OCI-LY7 (cell line): ENCODE measurements at regions of chr12 and their contacts with region 1.

Region 1: GRCh38 chr12:52032804-52033502 is 18.3 kb upstream of the NR4A1 start:
- DNase-seq: peak; percentile 95
- H3K4me3 ChIP-seq: peak overlapping the region; percentile 62
- H3K27ac ChIP-seq: peak overlapping the region; percentile 54
- H3K4me1 ChIP-seq: peaks cover 44% of the 10 kb centered on the region
- CTCF ChIP-seq: no peak

Region 2: GRCh38 chr12:51932218-51933076 is 100.5 kb before region 1 on chr12:
- CTCF ChIA-PET with region 1: no interaction called
- POLR2A ChIA-PET with region 1: no interaction called
- intact Hi-C with region 1: no loop called
- DNase-seq: no peak
- H3K4me3 ChIP-seq: no peak overlapping the region
- H3K27ac ChIP-seq: no peak overlapping the region
- H3K4me1 ChIP-seq: no peaks in the 10 kb centered on the region
- CTCF ChIP-seq: no peak

Region 3: GRCh38 chr12:51942501-51943000 is 90.4 kb before region 1 on chr12:
- CTCF ChIA-PET with region 1: no interaction called
- POLR2A ChIA-PET with region 1: no interaction called
- intact Hi-C with region 1: no loop called
- DNase-seq: no peak
- H3K4me3 ChIP-seq: no peak overlapping the region
- H3K27ac ChIP-seq: no peak overlapping the region
- H3K4me1 ChIP-seq: no peaks in the 10 kb centered on the region
- CTCF ChIP-seq: no peak

Region 4: GRCh38 chr12:52050761-52051541 is 18.0 kb after region 1 on chr12 and contains the start of gene NR4A1:
- CTCF ChIA-PET with region 1: interaction called, 3 read pairs
- POLR2A ChIA-PET with region 1: interaction called, 10 read pairs
- intact Hi-C with region 1: loop called (anchors 2 kb)
- DNase-seq: peak; percentile 84
- H3K4me3 ChIP-seq: peak within 1 kb of the TSS; percentile 68
- H3K27ac ChIP-seq: peak within 1 kb of the TSS; percentile 66
- H3K4me1 ChIP-seq: peaks cover 36% of the 10 kb centered on the region
- CTCF ChIP-seq: peak; percentile 53
- total RNA-seq, gene NR4A1: 25.3 and 29.3 TPM in 2 replicates

Region 5: GRCh38 chr12:52069327-52070184 is 36.6 kb after region 1 on chr12 and contains the start of gene ATG101:
- CTCF ChIA-PET with region 1: interaction called, 3 read pairs
- POLR2A ChIA-PET with region 1: interaction called, 5 read pairs
- intact Hi-C with region 1: loop called (anchors 2 kb)
- DNase-seq: peak; percentile 98
- H3K4me3 ChIP-seq: peak within 1 kb of the TSS; percentile 91
- H3K27ac ChIP-seq: peak within 1 kb of the TSS; percentile 73
- H3K4me1 ChIP-seq: peaks cover 39% of the 10 kb centered on the region
- CTCF ChIP-seq: peak; percentile 81
- total RNA-seq, gene ATG101: 53.9 and 65.5 TPM in 2 replicates

Region 6: GRCh38 chr12:52082988-52083637 is 50.2 kb after region 1 on chr12:
- CTCF ChIA-PET with region 1: interaction called, 10 read pairs
- POLR2A ChIA-PET with region 1: interaction called, 7 read pairs
- intact Hi-C with region 1: no loop called
- DNase-seq: peak; percentile 80
- H3K4me3 ChIP-seq: no peak overlapping the region
- H3K27ac ChIP-seq: peak overlapping the region; percentile 84
- H3K4me1 ChIP-seq: peaks cover 68% of the 10 kb centered on the region
- CTCF ChIP-seq: peak; percentile 100

Region 7: DNA sequence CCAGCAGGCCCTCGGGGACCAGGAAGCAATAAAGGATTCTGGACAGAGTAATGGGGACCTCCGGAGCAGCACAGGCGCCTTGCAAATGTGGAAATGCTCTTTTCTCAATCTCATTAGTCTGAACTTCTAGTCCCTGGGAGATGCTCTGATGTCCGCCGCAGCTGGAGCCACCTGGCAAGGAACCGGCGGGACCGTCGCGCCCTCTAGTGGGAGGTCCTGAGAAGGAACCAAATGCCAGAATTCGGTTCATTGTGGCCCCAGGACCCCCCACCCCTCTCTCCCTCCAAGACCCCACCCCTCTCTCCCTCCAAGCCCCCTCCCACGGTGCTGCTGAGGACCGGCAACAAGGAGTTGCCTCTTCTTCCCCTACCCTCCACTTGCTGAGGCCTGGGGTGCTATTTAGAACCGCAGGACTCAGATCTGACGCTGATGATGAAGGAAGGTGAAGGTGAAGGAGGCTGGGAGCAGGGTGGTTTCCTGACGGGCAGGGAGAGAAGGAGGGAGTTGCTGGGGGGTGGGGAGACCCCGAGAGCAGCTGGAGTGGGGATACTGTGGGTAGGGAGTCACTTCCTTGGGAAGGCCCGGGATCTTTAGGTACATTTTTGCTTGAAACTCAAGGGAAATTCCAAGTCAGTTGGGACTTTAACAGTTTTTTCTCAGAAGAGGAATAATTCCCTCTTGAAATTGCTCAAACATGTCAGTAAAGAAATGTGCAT is 89.0 kb after region 1 on chr12:
- CTCF ChIA-PET with region 1: interaction called, 19 read pairs
- POLR2A ChIA-PET with region 1: interaction called, 33 read pairs
- intact Hi-C with region 1: no loop called
- DNase-seq: peak; percentile 86
- H3K4me3 ChIP-seq: peak overlapping the region; percentile 27
- H3K27ac ChIP-seq: peak overlapping the region; percentile 41
- H3K4me1 ChIP-seq: peaks cover 70% of the 10 kb centered on the region
- CTCF ChIP-seq: peak; percentile 89

Region 8: DNA sequence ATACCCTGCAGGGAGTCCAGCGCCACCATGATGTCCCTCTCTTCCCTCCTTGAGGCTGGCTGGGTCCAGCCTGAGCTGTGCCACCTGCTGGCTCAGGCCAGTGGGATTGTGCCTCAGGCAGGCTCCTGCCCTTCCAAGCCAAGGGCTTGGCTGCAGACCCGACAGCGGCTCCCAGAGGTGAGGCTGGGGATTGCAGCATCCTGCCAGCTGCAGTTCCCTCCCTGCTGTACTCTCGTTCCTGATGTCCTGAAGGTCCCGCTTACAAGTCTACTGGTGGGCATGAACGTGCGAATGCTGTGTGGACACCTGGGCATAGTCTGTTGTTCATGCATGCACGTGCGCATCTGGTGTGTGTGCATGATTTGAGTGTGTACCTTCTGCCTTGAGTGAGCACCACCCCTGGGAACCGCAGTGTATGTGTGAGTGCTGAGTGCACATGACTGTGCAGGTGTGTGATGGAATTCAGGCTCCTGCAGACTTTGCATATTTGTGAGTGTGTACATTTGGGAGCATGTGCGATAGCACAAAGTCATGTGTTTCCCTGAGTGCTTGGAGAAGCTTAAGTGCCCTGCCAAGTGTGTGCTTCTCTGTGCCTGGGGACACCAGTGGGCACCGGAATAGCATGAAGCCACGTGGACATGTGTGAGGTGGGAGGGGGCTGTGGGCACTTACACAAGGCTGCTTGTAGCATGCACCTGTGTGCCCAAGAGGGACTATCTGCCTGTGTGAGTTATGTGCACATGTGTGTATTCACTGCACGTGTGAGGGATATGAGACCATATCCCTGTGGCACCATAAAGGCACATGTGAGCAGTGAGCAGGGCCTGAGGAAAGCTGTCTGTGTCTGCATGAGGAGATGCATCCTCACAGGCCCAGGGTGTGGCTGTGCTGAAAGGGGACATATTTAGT is 180.8 kb after region 1 on chr12:
- CTCF ChIA-PET with region 1: no interaction called
- POLR2A ChIA-PET with region 1: no interaction called
- intact Hi-C with region 1: no loop called
- DNase-seq: peak; percentile 49
- H3K4me3 ChIP-seq: no peak overlapping the region
- H3K27ac ChIP-seq: no peak overlapping the region
- H3K4me1 ChIP-seq: no peaks in the 10 kb centered on the region
- CTCF ChIP-seq: peak; percentile 86

Region 9: DNA sequence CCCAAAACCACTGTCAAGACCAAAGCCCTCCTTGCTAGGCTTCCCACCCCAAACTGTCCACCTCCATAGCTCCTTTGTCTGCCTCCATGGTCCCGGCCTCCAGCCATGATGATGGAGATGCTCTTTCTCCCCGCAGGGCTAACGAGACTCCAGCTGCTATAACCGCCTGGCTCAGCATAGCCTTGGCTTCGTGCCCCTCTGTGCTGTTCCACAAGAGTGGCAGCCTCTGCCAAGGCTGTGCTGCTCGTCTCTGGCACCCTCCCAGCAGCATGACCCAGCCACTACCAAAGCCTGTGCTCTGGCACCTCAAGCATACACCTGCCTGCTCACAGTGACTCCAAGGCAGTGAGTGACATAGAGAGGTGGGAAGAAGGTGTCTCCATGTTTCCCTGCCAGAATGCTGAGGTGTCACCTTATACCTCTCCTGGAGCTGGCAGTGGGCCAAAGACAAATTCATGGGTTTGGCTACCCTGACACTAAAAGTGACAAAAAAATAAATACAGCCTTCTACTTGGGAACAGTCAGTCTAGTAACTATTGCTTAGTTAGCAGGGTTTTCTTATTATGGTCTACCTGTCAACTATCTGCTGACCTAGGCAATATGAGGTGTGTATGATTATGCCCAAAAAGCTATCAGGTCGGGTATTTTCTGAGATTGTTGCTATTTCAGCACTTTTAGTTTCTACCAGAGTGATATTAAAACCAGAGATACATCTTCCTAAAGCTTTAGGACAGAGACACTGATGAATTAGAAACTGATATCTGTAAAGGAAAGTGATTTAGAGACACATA is 601.5 kb after region 1 on chr12:
- CTCF ChIA-PET with region 1: no interaction called
- POLR2A ChIA-PET with region 1: no interaction called
- intact Hi-C with region 1: no loop called
- DNase-seq: no peak
- H3K4me3 ChIP-seq: no peak overlapping the region
- H3K27ac ChIP-seq: no peak overlapping the region
- H3K4me1 ChIP-seq: no peaks in the 10 kb centered on the region
- CTCF ChIP-seq: no peak